Sciatic nerve (tissue), 2 donors: ENCODE measurements at regions of chr4 and their contacts with region 1.

Region 1: DNA sequence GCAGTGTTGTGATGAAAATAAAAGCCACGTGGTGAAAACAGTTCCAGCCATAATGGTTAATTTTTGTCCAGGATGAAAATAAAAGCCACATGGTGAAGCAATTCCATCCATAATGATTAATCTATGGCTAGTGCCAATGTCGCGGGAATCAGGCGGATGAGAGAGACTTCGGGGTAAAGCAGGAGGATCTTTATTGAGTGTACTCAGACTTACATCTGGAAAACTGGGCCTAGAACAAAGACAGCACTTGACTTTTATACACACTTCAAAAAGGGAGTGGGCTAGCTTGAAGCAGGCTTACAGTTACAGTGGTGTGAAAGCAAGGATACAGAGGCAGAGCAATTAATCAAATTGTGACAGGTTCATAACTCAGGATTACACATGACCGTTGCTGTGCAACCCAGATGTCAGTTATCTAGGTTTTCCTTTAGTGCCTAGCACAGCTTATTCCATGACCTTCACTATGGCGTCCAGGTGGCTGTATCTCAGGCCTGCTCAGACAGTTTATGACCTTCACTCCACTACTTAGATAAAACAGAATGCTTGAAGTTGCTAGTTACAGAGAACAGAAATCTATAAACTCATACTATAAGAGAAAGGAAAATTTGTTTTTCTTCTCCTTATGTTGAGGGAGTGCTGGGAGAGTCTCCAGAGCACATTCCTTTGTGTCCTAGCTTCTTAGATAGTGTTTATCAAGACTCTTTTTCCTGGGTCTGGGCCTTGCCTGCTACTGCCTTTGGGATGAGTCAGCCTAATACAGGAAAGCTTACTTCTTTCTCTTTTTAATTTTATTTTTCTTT is 5.9 kb upstream of the PLA2G12A start:
- DNase-seq: no peak
- ATAC-seq: no peak

Region 2: DNA sequence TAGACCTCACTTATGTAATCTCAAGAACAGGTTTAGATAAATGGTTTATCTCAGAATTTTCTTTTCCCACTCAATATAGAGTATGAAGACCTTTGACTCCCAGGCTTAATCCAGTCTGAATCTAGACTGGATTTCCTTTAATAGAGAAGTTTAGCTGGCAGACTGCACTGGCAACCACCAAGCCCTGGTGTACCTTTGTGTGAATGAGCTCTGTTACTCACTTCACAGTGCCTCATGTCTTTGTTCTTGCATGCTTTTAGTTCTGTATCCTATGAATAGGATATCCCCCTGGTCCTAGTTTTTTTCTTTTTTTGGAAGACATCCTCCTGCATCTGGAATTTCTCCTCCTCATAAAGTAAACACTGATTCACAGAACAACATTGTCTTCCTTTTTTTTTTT is 228.9 kb before region 1 on chr4:
- intact Hi-C with region 1: no loop called
- DNase-seq: no peak
- ATAC-seq: no peak

Region 3: GRCh38 chr4:109764376-109764775 is 28.6 kb after region 1 on chr4:
- intact Hi-C with region 1: loop called (anchors 1 kb)
- DNase-seq: no peak
- ATAC-seq: no peak